PC-9 (cell line): ENCODE measurements at regions of chr7 and their contacts with region 1.

Region 1: DNA sequence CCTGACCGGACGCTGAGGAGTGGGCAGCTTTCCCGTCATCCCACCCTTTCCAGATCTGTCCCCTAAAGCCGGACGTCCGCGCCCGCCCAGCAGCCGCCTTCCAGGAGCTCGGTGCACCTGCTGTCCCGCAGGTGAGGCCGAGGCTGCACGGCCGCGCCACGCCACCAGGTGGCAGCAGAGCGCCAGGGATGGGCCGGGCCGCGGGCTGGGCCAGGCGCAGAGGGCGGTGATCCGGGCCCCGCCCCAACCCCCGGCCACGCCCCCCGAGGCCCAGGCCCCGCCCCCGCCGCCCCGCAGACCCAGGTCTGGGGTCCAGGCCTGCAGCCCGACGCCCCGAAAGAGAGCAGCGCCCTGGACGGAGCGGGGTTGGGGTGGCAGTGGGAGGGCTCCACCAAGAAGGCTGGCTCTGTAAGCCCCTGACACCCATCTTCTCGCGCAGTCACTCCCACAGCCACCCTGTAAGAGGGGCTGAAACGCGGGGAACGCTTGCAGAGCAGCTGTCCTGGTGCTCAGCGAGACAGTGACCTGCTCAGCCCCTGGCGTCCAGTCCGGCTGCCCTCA is 32.2 kb downstream of the FOXL3 start:
- DNase-seq: peak; percentile 45 to 92
- H3K4me3 ChIP-seq: no peak overlapping the region
- H3K27ac ChIP-seq: no peak overlapping the region
- H3K4me1 ChIP-seq: peaks cover 20% of the 10 kb centered on the region
- H3K27me3 ChIP-seq: peaks cover 58% of the 10 kb centered on the region
- CTCF ChIP-seq: peak; percentile 83

Region 2: GRCh38 chr7:774161-775109 is 452.2 kb after region 1 on chr7:
- CTCF ChIA-PET with region 1: no interaction called
- POLR2A ChIA-PET with region 1: no interaction called
- intact Hi-C with region 1: loop called (anchors 2 kb)
- DNase-seq: peak in 1 of 2 experiments; percentile 37
- H3K4me3 ChIP-seq: no peak overlapping the region
- H3K27ac ChIP-seq: no peak overlapping the region
- H3K4me1 ChIP-seq: no peaks in the 10 kb centered on the region
- H3K27me3 ChIP-seq: no peaks in the 10 kb centered on the region
- CTCF ChIP-seq: peak; percentile 86